ENCODE measurements at regions of chr3 and their contacts with region 1.

Region 1: GRCh38 chr3:112642912-112643506 is 2.1 kb upstream of the CCDC80 start:
- DNase-seq: peak; percentile 84
- ATAC-seq: peak; percentile 97
- H3K4me3 ChIP-seq: peak overlapping the region in 1 of 5 experiments; percentile 1
- H3K4me3 Mint-ChIP-seq: peak overlapping the region; percentile 66
- H3K27ac ChIP-seq: no peak overlapping the region
- H3K27ac Mint-ChIP-seq: no peak overlapping the region
- H3K4me1 ChIP-seq: peaks cover 0 to 9% of the 10 kb centered on the region in 2 donors
- H3K4me1 Mint-ChIP-seq: peaks cover 8% of the 10 kb centered on the region
- H3K27me3 ChIP-seq: peaks cover 0 to 12% (median 2%) of the 10 kb centered on the region in 4 experiments
- H3K27me3 Mint-ChIP-seq: peaks cover 4% of the 10 kb centered on the region
- CTCF ChIP-seq: peak; percentile 80

Region 2: GRCh38 chr3:112653209-112653871 is 10.3 kb after region 1 on chr3:
- CTCF ChIA-PET with region 1: interaction called, 20 read pairs
- POLR2A ChIA-PET with region 1: no interaction called
- intact Hi-C with region 1: no loop called
- DNase-seq: no peak
- ATAC-seq: no peak
- H3K4me3 ChIP-seq: no peak overlapping the region
- H3K4me3 Mint-ChIP-seq: no peak overlapping the region
- H3K27ac ChIP-seq: no peak overlapping the region
- H3K27ac Mint-ChIP-seq: no peak overlapping the region
- H3K4me1 ChIP-seq: no peaks in the 10 kb centered on the region
- H3K4me1 Mint-ChIP-seq: peaks cover 3% of the 10 kb centered on the region
- H3K27me3 ChIP-seq: no peaks in the 10 kb centered on the region
- H3K27me3 Mint-ChIP-seq: no peaks in the 10 kb centered on the region
- CTCF ChIP-seq: no peak

Region 3: GRCh38 chr3:112814266-112814665 is 171.3 kb after region 1 on chr3:
- CTCF ChIA-PET with region 1: interaction called, 11 read pairs
- POLR2A ChIA-PET with region 1: no interaction called
- intact Hi-C with region 1: no loop called
- DNase-seq: peak; percentile 51
- ATAC-seq: no peak
- H3K4me3 ChIP-seq: no peak overlapping the region
- H3K4me3 Mint-ChIP-seq: peak overlapping the region; percentile 66
- H3K27ac ChIP-seq: peak overlapping the region; percentile 15 to 50
- H3K27ac Mint-ChIP-seq: peak overlapping the region; percentile 71
- H3K4me1 ChIP-seq: peaks cover 30 to 42% of the 10 kb centered on the region in 2 donors
- H3K4me1 Mint-ChIP-seq: peaks cover 53% of the 10 kb centered on the region
- H3K27me3 ChIP-seq: no peaks in the 10 kb centered on the region
- H3K27me3 Mint-ChIP-seq: no peaks in the 10 kb centered on the region
- CTCF ChIP-seq: no peak

Region 4: GRCh38 chr3:112979240-112979832 is 336.3 kb after region 1 on chr3:
- CTCF ChIA-PET with region 1: interaction called, 96 read pairs
- POLR2A ChIA-PET with region 1: no interaction called
- intact Hi-C with region 1: loop called (anchors 1 kb)
- DNase-seq: peak; percentile 71
- ATAC-seq: peak; percentile 35
- H3K4me3 ChIP-seq: no peak overlapping the region
- H3K4me3 Mint-ChIP-seq: no peak overlapping the region
- H3K27ac ChIP-seq: no peak overlapping the region
- H3K27ac Mint-ChIP-seq: no peak overlapping the region
- H3K4me1 ChIP-seq: peaks cover 41 to 49% of the 10 kb centered on the region in 2 donors
- H3K4me1 Mint-ChIP-seq: peaks cover 61% of the 10 kb centered on the region
- H3K27me3 ChIP-seq: no peaks in the 10 kb centered on the region
- H3K27me3 Mint-ChIP-seq: no peaks in the 10 kb centered on the region
- CTCF ChIP-seq: peak; percentile 94

Region 5: DNA sequence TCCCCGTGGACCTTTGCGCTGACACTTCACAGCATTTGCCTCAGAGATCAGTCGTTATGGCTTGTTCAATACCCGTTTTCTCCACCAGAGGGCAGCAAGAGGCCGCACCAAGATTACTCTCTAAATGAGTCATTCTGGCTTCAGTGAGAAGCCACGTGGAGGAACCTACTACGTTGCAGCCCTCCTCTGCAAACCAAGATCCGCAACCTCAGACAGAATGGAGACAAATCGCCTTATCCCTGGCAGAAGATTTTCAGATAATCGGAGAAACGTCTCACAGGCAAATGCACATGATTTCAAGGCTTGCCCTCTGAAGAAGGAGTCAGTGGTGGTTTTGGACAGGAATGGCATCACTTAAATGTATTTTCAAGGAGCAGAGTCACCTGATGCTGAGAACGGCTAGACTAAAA is 408.3 kb after region 1 on chr3:
- CTCF ChIA-PET with region 1: no interaction called
- POLR2A ChIA-PET with region 1: no interaction called
- intact Hi-C with region 1: loop called (anchors 1 kb)
- DNase-seq: peak; percentile 88
- ATAC-seq: peak; percentile 100
- H3K4me3 ChIP-seq: no peak overlapping the region
- H3K4me3 Mint-ChIP-seq: no peak overlapping the region
- H3K27ac ChIP-seq: no peak overlapping the region
- H3K27ac Mint-ChIP-seq: no peak overlapping the region
- H3K4me1 ChIP-seq: peaks cover 0 to 4% of the 10 kb centered on the region in 2 donors
- H3K4me1 Mint-ChIP-seq: peaks cover 2% of the 10 kb centered on the region
- H3K27me3 ChIP-seq: no peaks in the 10 kb centered on the region
- H3K27me3 Mint-ChIP-seq: no peaks in the 10 kb centered on the region
- CTCF ChIP-seq: peak; percentile 95